Activated B cell treated with CpG ODN at 0.5 μM for 24 hours (primary cell): ENCODE measurements at regions of chr17 and their contacts with region 1.

Region 1: DNA sequence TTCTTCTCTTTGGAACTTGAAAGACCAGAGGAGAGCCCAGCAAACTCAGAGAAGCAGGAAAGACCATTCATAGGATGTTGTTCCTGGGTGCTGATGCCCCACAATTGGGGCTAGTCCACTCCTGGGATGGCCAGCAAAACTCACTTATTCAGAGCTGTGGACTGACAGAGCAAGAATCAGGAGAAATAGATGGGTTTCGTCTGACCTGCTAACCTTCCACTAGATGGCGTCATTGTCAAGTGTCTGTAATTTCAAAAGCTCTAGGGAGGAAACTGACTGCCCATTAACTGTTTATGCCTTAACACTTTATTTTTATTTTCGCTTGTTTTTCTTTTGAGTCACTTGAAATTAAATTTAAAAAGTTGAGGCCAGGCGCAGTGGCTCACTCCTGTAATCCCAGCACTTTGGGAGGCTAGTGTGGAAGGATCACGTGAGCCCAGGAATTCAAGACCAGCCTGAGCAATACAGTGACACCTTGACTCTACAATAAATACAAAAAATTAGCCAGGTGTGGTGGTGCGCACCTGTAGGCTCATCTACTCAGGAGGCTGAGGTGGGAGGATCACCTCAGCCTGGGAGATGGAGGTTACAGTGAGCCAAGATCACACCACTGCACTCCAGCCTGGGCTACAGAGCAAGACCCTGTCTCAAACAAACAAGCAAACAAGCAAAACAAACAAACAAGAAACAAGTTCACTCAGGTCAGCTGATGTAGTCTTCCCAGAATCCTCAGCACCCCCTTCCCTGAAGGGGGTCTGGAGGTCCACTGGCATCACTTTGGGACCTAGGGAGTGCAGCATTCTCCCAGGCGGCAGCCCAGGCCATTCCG is 28.6 kb upstream of the MILR1 start:
- DNase-seq: no peak
- ATAC-seq: peak; percentile 78
- H3K4me3 Mint-ChIP-seq: no peak overlapping the region
- H3K27ac Mint-ChIP-seq: no peak overlapping the region
- H3K4me1 Mint-ChIP-seq: peaks cover 4% of the 10 kb centered on the region
- H3K27me3 Mint-ChIP-seq: no peaks in the 10 kb centered on the region
- CTCF ChIP-seq: peak; percentile 30

Region 2: DNA sequence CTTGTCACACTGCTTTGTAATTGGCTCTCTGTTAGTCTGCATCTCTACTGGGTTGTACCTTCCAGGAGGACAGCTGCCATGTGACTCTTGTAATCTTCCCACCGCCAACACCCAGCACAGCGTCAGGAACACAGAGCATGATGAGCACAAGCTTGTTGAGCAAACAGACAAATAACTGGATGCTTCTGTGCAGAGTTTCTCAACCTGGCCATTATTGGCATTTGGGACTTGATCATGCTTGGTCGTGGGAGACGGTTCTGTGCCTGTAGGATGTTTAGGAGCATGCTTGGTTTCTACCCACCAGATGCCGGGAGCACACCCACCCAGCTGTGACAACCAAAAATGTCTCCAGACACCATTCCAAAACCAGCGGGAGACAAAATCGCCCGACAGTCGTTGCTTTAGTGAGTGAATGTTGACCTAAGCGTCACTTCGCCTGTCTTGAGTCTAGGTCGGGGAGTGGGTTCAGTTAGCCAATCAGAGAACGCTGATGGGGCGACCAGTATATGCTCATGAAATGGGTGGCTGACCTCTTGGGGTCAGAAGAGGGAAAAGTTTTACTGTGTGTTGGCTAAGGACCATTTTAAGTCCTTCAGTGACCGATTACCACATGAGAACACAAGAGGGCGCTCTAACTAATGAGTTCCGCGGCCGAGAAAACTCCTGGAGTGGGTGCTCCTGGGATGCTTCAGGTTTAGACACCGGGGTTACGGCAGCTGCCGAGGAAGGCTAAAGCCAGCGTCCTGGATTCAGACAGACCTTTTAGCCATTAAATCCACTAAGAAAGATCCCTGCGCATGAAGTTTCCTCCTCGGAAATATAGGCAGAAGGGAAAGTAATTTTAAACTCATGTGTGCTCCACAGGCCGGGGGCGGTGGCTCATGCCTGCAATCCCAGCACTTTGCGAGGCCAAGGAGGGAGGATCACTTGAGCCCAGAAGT is 99.5 kb before region 1 on chr17:
- CTCF ChIA-PET with region 1: interaction called, 170 read pairs
- POLR2A ChIA-PET with region 1: interaction called, 3 read pairs
- intact Hi-C with region 1: loop called (anchors 1 kb)
- DNase-seq: peak; percentile 21
- ATAC-seq: no peak
- H3K4me3 Mint-ChIP-seq: peak overlapping the region; percentile 55
- H3K27ac Mint-ChIP-seq: no peak overlapping the region
- H3K4me1 Mint-ChIP-seq: peaks cover 43% of the 10 kb centered on the region
- H3K27me3 Mint-ChIP-seq: peaks cover 2% of the 10 kb centered on the region
- CTCF ChIP-seq: no peak

Region 3: GRCh38 chr17:64343071-64343852 is 77.1 kb before region 1 on chr17:
- CTCF ChIA-PET with region 1: no interaction called
- POLR2A ChIA-PET with region 1: no interaction called
- intact Hi-C with region 1: no loop called
- DNase-seq: no peak
- ATAC-seq: no peak
- H3K4me3 Mint-ChIP-seq: no peak overlapping the region
- H3K27ac Mint-ChIP-seq: no peak overlapping the region
- H3K4me1 Mint-ChIP-seq: no peaks in the 10 kb centered on the region
- H3K27me3 Mint-ChIP-seq: no peaks in the 10 kb centered on the region
- CTCF ChIP-seq: no peak

Region 4: DNA sequence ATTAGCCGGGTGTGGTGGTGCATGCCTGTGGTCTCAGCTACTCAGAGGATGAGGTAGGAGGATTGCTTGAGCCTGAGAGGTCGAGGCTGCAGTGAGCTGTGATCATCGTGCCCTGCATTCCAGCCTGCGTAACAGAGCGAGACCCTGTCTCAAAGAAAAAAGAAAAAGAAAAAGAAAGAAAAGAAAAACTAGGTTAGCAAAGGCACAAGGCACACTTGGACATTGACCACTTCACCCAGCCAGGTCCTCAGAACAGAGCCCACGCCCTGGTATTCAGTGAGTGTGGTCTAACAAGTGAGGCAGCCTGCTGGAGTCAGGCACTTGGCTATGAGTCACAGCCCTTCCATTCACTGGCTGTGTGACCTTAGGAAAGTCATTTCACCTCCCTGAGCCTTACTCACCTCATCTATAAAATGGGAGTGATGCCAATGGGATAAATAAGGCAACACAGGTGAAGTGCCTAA is 39.0 kb after region 1 on chr17:
- CTCF ChIA-PET with region 1: interaction called, 4 read pairs
- POLR2A ChIA-PET with region 1: no interaction called
- intact Hi-C with region 1: loop called (anchors 5 kb)
- DNase-seq: no peak
- ATAC-seq: no peak
- H3K4me3 Mint-ChIP-seq: no peak overlapping the region
- H3K27ac Mint-ChIP-seq: no peak overlapping the region
- H3K4me1 Mint-ChIP-seq: peaks cover 47% of the 10 kb centered on the region
- H3K27me3 Mint-ChIP-seq: no peaks in the 10 kb centered on the region
- CTCF ChIP-seq: no peak

Region 5: GRCh38 chr17:64496786-64497564 is 76.6 kb after region 1 on chr17 and contains the start of gene POLG2:
- CTCF ChIA-PET with region 1: interaction called, 174 read pairs
- POLR2A ChIA-PET with region 1: interaction called, 26 read pairs
- intact Hi-C with region 1: loop called (anchors 1 kb)
- DNase-seq: peak; percentile 93
- ATAC-seq: peak; percentile 85
- H3K4me3 Mint-ChIP-seq: peak within 1 kb of the TSS; percentile 100
- H3K27ac Mint-ChIP-seq: peak within 1 kb of the TSS; percentile 99
- H3K4me1 Mint-ChIP-seq: peaks cover 75% of the 10 kb centered on the region
- H3K27me3 Mint-ChIP-seq: no peaks in the 10 kb centered on the region
- CTCF ChIP-seq: no peak
- total RNA-seq, gene POLG2: 50.3 and 63.9 TPM in 2 replicates

Region 6: DNA sequence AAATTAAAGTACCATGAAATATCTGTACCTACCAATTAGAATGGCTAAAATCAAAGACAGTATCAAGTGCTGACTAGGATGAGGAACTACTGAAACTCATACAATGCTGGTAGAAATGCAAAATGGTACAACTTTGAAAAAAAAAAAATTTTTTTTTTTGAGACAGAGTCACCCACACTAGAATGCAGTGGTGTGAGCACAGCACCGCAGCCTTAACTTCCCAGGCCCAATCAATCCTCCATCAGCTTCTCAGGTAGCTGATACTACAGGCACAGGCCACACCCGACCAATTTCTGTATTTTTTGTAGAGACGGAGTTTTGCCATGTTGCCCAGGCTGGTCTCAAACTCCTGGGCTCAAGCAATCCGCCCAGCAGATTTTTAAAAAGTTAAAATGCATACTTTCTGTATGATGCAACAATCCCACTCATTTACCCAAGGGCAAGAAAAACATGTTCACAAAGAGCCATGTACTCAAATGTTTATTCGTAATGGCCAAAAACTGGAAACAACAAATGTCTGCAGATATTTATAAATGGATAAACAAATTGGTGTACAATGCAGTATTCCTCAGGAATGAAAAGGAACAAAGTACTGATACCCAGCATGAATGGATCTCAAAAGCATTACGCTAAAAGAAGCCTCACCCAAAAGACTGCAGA is 233.1 kb after region 1 on chr17:
- CTCF ChIA-PET with region 1: interaction called, 24 read pairs
- POLR2A ChIA-PET with region 1: interaction called, 4 read pairs
- intact Hi-C with region 1: loop called (anchors 1 kb)
- DNase-seq: no peak
- ATAC-seq: no peak
- H3K4me3 Mint-ChIP-seq: no peak overlapping the region
- H3K27ac Mint-ChIP-seq: no peak overlapping the region
- H3K4me1 Mint-ChIP-seq: peaks cover 13% of the 10 kb centered on the region
- H3K27me3 Mint-ChIP-seq: no peaks in the 10 kb centered on the region
- CTCF ChIP-seq: no peak